WTC11 (cell line): ENCODE measurements at regions of chr2 and their contacts with region 1.

Region 1: DNA sequence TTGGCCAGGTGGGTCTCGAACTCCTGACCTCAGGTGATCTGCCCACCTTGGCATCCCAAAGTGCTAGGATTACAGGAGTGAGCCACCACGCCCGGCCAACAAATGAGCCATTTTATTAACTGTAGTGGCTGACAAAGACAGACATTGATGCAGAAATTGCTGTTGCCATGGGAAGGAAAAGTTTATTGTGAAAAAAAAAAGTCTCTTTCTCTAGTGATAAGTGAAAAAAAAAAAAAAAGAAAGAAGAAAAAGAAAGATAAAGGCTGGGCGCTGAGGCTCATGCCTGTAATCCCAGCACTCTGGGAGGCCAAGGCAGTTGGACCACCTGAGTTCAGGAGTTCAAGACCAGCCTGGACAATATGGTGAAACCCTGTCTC is 39.8 kb upstream of the RAB1A start:
- DNase-seq: no peak
- ATAC-seq: no peak
- H3K4me3 Mint-ChIP-seq: no peak overlapping the region
- H3K27ac Mint-ChIP-seq: no peak overlapping the region
- H3K4me1 Mint-ChIP-seq: no peaks in the 10 kb centered on the region
- H3K27me3 Mint-ChIP-seq: no peaks in the 10 kb centered on the region
- CTCF ChIP-seq: no peak

Region 2: DNA sequence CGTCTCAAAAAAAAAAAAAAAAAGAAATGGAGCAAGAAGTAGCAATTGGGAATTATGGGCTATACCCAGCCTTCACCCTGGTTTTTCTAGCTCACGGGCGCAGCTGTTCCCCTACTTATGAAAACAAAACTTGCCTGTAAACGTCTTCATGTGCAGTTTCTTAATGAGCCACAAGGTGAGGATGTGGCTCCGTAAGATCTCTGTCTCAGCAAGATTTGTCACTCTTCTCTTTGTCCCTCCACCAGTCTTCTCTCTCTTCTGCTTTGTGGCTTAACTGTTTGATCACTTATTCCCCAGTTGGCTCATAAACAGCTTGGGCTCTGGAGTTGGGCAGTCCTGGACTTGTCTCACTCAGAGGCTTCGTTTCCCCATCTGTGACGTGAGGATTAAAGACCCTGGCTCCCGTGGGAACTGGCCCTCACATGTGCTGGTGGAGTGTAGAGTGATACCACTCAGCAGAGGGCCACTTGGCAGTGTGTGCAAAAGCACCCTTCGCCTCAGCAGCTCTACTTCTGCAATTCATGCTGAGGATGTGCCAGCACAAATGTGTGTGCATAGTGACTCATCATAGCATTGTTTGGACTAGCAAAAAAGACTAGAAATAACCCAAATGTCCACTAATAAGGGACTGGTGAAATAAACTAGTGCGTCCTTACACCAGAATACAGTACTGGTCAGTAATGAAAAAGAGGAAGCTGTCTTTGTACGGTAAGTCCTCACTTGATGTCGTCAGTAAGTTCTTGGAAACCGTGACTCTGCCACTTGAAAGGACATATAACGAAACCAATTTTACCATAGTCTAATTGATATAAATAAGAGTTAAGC is 104.8 kb before region 1 on chr2:
- CTCF ChIA-PET with region 1: interaction called, 39 read pairs
- POLR2A ChIA-PET with region 1: no interaction called
- DNase-seq: no peak
- ATAC-seq: peak; percentile 76
- H3K4me3 Mint-ChIP-seq: no peak overlapping the region
- H3K27ac Mint-ChIP-seq: peak overlapping the region; percentile 59
- H3K4me1 Mint-ChIP-seq: peaks cover 12% of the 10 kb centered on the region; the same call in 1 of the 2 replicates
- H3K27me3 Mint-ChIP-seq: no peaks in the 10 kb centered on the region
- CTCF ChIP-seq: peak; percentile 35; the same call in 1 of the 2 replicates

Region 3: DNA sequence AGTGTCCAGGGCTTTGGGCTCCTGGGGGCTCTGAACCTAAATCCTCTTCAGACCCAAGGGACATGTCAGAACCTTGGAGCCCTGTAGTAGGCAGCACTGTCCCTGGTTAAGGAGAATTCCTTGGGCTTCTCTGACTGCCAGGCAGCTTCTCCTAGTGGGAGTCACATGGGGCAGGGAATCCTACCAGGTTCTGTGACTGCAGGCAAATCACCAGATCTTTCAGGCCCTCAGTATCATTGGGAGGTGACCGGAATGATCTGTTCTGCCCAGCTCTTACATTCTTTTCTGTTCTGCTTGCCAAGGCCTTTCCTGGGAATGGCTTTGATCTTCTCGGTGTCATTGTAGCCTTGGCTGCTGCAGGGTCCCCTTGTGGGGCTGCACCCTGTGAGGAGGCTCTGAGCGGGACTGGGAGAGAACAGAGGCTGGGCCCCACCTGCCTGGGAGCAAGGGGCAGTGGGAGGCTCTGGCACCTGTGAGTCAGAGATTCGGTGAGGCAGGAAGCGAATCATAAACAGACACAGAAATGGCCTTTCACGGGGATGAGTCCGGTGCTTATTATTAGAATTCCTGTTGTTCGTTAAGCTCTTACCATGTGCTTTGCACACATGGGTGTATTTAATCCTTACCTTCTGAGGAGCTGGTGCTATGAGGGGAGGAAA is 99.4 kb before region 1 on chr2:
- CTCF ChIA-PET with region 1: interaction called, 39 read pairs
- POLR2A ChIA-PET with region 1: no interaction called
- DNase-seq: no peak
- ATAC-seq: peak; percentile 54
- H3K4me3 Mint-ChIP-seq: no peak overlapping the region
- H3K27ac Mint-ChIP-seq: peak overlapping the region; percentile 61; the same call in 1 of the 2 replicates
- H3K4me1 Mint-ChIP-seq: peaks cover 8% of the 10 kb centered on the region
- H3K27me3 Mint-ChIP-seq: no peaks in the 10 kb centered on the region
- CTCF ChIP-seq: no peak

Region 4: GRCh38 chr2:65075605-65076344 is 94.0 kb before region 1 on chr2:
- CTCF ChIA-PET with region 1: interaction called, 19 read pairs
- POLR2A ChIA-PET with region 1: no interaction called
- DNase-seq: peak; percentile 36
- ATAC-seq: peak; percentile 60
- H3K4me3 Mint-ChIP-seq: no peak overlapping the region; the same call in 1 of the 2 replicates
- H3K27ac Mint-ChIP-seq: peak overlapping the region; percentile 89
- H3K4me1 Mint-ChIP-seq: peaks cover 32% of the 10 kb centered on the region
- H3K27me3 Mint-ChIP-seq: no peaks in the 10 kb centered on the region
- CTCF ChIP-seq: no peak

Region 5: DNA sequence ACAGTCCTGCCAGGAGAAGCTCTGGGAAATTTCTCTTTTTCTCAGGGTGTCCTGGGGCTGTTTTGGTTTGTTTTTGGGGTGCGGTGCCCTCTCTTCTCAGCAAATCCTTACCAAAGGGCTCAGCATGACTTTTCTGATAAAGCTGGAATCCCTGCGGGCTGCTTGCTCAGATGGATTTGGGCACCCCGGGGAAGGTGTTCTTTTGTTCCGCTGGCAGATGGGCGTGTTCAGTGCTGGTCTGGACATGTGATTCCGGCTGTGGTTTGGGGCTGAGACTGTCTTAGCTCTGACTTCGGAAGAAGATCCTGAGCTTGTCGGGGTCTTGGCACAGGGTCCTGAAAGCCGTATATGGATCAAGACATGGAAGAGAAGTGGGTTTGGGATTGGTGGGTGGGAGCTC is 396.9 kb after region 1 on chr2:
- CTCF ChIA-PET with region 1: no interaction called
- POLR2A ChIA-PET with region 1: no interaction called
- DNase-seq: no peak
- ATAC-seq: peak; percentile 85
- H3K4me3 Mint-ChIP-seq: no peak overlapping the region
- H3K27ac Mint-ChIP-seq: no peak overlapping the region
- H3K4me1 Mint-ChIP-seq: peaks cover 13% of the 10 kb centered on the region
- H3K27me3 Mint-ChIP-seq: peaks cover 53% of the 10 kb centered on the region
- CTCF ChIP-seq: no peak